ENCODE measurements at regions of chr4 and their contacts with region 1.

Region 1: GRCh38 chr4:152094970-152095700 is 334.3 kb upstream of the GATB start:
- DNase-seq: no peak

Region 2: GRCh38 chr4:151887031-151887815 is 207.9 kb before region 1 on chr4:
- intact Hi-C with region 1: no loop called
- DNase-seq: no peak

Region 3: GRCh38 chr4:152021788-152022438 is 73.2 kb before region 1 on chr4:
- intact Hi-C with region 1: loop called (anchors 5 kb)
- DNase-seq: peak; percentile 72 to 98 (median 94)